SK-N-SH (cell line): ENCODE measurements at regions of chr19 and their contacts with region 1.

Region 1: GRCh38 chr19:10864538-10864899 is 6.8 kb upstream of the CARM1 start:
- DNase-seq: peak; percentile 91
- H3K4me3 ChIP-seq: peak overlapping the region in 1 of 2 experiments; percentile 36; a peak in 1 of 4 replicates
- H3K27ac ChIP-seq: no peak overlapping the region
- H3K4me1 ChIP-seq: no peaks in the 10 kb centered on the region; a peak in 1 of 4 replicates
- H3K27me3 ChIP-seq: no peaks in the 10 kb centered on the region
- CTCF ChIP-seq: peak; percentile 95
- EP300 ChIP-seq: no peak
- RAD21 ChIP-seq: peak; percentile 72

Region 2: GRCh38 chr19:10701955-10702525 is 162.5 kb before region 1 on chr19:
- CTCF ChIA-PET with region 1: interaction called, 30 read pairs
- POLR2A ChIA-PET with region 1: interaction called, 4 read pairs
- DNase-seq: peak; percentile 82
- H3K4me3 ChIP-seq: peak overlapping the region; percentile 69 to 70
- H3K27ac ChIP-seq: peak overlapping the region; percentile 45 to 46; a peak in 2 of 4 replicates
- H3K4me1 ChIP-seq: no peaks in the 10 kb centered on the region; a peak in 1 of 4 replicates
- H3K27me3 ChIP-seq: no peaks in the 10 kb centered on the region
- CTCF ChIP-seq: no peak
- EP300 ChIP-seq: no peak
- RAD21 ChIP-seq: peak; percentile 35

Region 3: GRCh38 chr19:10730923-10731322 is 133.6 kb before region 1 on chr19:
- CTCF ChIA-PET with region 1: interaction called, 10 read pairs
- POLR2A ChIA-PET with region 1: no interaction called
- DNase-seq: no peak
- H3K4me3 ChIP-seq: no peak overlapping the region
- H3K27ac ChIP-seq: no peak overlapping the region
- H3K4me1 ChIP-seq: no peaks in the 10 kb centered on the region; a peak in 1 of 4 replicates
- H3K27me3 ChIP-seq: no peaks in the 10 kb centered on the region
- CTCF ChIP-seq: no peak
- EP300 ChIP-seq: no peak
- RAD21 ChIP-seq: no peak

Region 4: DNA sequence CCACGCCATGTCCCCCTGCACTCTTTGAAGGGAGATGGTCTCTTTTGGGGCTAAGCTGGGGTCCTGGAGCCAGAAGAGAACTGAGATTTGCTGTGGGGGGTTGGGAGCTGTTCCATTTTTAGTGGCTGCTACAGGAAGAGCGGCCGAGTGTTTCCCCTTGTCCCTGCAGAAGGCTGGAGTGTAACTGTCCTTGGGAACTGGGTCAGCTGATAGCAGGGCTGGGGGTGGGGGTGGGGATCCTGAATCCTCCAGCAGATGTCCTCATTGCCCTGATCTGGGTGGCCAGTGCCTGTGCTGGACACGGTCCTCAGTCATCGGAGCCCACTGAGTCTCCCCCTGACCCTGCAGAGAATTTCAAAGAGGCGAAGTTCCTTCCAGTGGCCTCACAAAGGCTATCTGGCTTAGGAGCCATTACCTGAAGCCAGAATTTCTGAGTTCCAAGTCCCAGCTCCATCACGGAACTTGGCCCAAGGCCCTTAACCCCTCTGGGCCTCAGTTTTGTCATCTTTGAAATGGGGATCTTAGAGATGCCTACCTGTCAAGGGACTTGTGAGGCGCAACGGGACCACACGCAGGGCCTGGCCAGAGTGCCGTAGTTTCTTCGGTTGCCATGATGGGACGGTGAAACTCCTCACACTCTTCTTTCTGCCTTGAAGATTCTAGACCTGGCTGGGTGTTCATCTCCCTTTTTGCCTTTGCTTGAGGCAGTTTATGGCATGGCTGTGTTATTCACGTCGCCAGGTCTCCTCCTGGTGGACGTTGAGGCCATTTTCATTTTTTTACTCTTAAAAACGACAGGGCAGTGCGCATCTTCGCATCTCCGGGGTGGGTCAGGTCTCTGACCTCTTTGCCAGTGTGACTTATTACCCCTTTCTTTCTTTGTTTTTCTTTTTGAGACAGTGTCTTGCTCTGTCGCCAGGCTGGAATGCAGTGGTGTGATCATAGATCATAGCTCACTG is 94.7 kb before region 1 on chr19:
- CTCF ChIA-PET with region 1: interaction called, 74 read pairs
- POLR2A ChIA-PET with region 1: no interaction called
- DNase-seq: peak; percentile 80
- H3K4me3 ChIP-seq: no peak overlapping the region
- H3K27ac ChIP-seq: peak overlapping the region; percentile 38 to 56; a peak in 2 of 4 replicates
- H3K4me1 ChIP-seq: peaks cover 17 to 30% of the 10 kb centered on the region in 2 experiments
- H3K27me3 ChIP-seq: no peaks in the 10 kb centered on the region
- CTCF ChIP-seq: peak; percentile 37
- EP300 ChIP-seq: no peak
- RAD21 ChIP-seq: peak; percentile 76

Region 5: DNA sequence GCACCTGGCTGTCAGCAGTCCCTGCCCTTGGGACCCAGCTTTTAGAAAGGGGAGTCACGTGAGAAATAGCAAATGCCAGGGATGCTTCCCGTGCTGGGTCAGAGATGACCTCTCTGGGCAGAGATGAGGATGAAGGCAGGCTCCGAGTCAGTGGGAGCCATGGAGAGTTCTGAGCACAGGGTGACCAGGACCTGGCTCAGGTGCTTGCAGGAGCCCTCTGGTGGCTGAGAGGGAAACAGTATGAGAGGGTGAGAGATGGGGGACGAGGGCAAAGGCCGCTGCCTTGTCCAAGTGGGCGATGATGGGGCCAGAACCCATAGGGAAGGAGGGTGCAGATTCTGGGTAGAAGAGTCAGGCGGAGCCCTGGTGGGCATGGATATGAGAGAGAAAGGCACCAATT is 44.3 kb before region 1 on chr19:
- CTCF ChIA-PET with region 1: interaction called, 13 read pairs
- POLR2A ChIA-PET with region 1: no interaction called
- DNase-seq: peak; percentile 58
- H3K4me3 ChIP-seq: no peak overlapping the region
- H3K27ac ChIP-seq: peak overlapping the region in 1 of 2 experiments; percentile 58; a peak in 2 of 4 replicates
- H3K4me1 ChIP-seq: peaks cover 28 to 53% of the 10 kb centered on the region in 2 experiments; a peak in 3 of 4 replicates
- H3K27me3 ChIP-seq: no peaks in the 10 kb centered on the region
- CTCF ChIP-seq: peak; percentile 42
- EP300 ChIP-seq: no peak
- RAD21 ChIP-seq: peak; percentile 35; the same call in 1 of the 2 replicates

Region 6: DNA sequence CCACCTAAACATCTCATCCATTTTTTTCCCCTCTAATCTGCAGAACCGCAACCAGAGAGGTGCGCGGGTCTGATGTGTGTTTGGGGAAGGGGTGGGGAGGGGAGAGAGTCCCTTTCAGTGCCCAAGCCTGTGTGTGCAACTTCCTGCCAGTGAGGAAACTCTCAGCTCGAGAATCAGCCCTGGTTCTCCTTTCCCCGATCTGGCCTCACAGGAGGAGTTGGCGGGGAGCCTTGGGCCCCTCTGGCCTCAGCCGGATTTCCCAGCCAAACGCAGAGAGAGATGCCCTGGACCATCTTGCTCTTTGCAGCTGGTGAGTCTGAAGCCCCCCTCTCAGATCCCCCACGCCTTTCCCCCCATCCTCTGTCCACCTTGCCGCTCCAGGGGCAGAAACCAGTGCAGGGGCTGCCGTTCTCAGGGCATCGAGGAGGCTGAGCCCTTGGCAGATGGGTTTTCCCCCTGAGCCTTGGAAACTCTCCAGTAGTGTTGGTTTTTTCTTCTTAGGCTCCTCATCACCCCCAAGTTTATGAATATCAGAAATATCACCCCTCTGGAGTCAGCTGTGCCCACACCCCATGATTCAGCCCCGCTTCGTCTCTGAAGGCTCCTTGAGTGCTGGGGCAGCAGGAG is 16.2 kb before region 1 on chr19 and contains the start of gene C19orf38:
- CTCF ChIA-PET with region 1: interaction called, 146 read pairs
- POLR2A ChIA-PET with region 1: no interaction called
- DNase-seq: no peak
- H3K4me3 ChIP-seq: no peak within 1 kb of the TSS
- H3K27ac ChIP-seq: no peak within 1 kb of the TSS
- H3K4me1 ChIP-seq: no peaks in the 10 kb centered on the region
- H3K27me3 ChIP-seq: no peaks in the 10 kb centered on the region
- CTCF ChIP-seq: no peak
- EP300 ChIP-seq: no peak
- RAD21 ChIP-seq: no peak
- polyA plus RNA-seq, gene C19orf38: 0.05 and 0.15 TPM in 2 replicates

Region 7: GRCh38 chr19:10915130-10916091 is 50.9 kb after region 1 on chr19:
- CTCF ChIA-PET with region 1: interaction called, 11 read pairs
- POLR2A ChIA-PET with region 1: no interaction called
- DNase-seq: peak; percentile 68
- H3K4me3 ChIP-seq: no peak overlapping the region
- H3K27ac ChIP-seq: peak overlapping the region; percentile 43 to 74; a peak in 3 of 4 replicates
- H3K4me1 ChIP-seq: peaks cover 4 to 17% of the 10 kb centered on the region in 2 experiments; a peak in 3 of 4 replicates
- H3K27me3 ChIP-seq: no peaks in the 10 kb centered on the region
- CTCF ChIP-seq: no peak
- EP300 ChIP-seq: peak in 1 of 2 experiments; percentile 38; a peak in 2 of 4 replicates
- RAD21 ChIP-seq: no peak